ENCODE measurements at regions of chr10 and their contacts with region 1.

Region 1: GRCh38 chr10:91573320-91573719 is 59.6 kb downstream of the PPP1R3C start:
- DNase-seq: no peak
- ATAC-seq: no peak
- H3K4me3 ChIP-seq: no peak overlapping the region
- H3K27ac ChIP-seq: no peak overlapping the region
- H3K4me1 ChIP-seq: peaks cover 1% of the 10 kb centered on the region
- H3K27me3 ChIP-seq: no peaks in the 10 kb centered on the region
- CTCF ChIP-seq: no peak
- POLR2A ChIP-seq: no peak
- RAD21 ChIP-seq: no peak

Region 2: DNA sequence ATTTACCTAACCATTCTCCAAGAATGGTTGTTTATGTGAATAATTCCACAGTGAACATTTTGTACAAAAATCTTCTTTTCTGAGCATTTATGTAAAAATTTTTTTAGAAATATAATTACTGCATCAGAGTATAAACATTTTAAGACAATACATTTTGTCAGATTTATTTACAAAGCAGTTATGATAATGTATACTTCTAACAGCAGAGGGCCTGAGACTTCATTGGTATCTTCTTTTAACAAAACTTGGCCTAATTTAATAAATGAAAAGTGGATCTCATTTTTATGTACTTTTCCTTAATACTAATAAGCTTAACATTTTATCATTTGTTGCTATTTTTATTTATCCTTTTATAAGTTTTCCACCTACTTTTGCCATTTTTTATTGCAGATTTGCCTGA is 93.7 kb before region 1 on chr10:
- CTCF ChIA-PET with region 1: no interaction called
- POLR2A ChIA-PET with region 1: interaction called, 14 read pairs
- dilution Hi-C with region 1: no loop called
- in situ Hi-C with region 1: no loop called
- intact Hi-C with region 1: no loop called
- DNase-seq: no peak
- ATAC-seq: no peak
- H3K4me3 ChIP-seq: no peak overlapping the region
- H3K27ac ChIP-seq: no peak overlapping the region
- H3K4me1 ChIP-seq: peaks cover 3% of the 10 kb centered on the region
- H3K27me3 ChIP-seq: no peaks in the 10 kb centered on the region
- CTCF ChIP-seq: no peak
- POLR2A ChIP-seq: no peak
- RAD21 ChIP-seq: no peak

Measured in IMR-90 (cell line).